ENCODE measurements at regions of chr21 and their contacts with region 1.

Region 1: DNA sequence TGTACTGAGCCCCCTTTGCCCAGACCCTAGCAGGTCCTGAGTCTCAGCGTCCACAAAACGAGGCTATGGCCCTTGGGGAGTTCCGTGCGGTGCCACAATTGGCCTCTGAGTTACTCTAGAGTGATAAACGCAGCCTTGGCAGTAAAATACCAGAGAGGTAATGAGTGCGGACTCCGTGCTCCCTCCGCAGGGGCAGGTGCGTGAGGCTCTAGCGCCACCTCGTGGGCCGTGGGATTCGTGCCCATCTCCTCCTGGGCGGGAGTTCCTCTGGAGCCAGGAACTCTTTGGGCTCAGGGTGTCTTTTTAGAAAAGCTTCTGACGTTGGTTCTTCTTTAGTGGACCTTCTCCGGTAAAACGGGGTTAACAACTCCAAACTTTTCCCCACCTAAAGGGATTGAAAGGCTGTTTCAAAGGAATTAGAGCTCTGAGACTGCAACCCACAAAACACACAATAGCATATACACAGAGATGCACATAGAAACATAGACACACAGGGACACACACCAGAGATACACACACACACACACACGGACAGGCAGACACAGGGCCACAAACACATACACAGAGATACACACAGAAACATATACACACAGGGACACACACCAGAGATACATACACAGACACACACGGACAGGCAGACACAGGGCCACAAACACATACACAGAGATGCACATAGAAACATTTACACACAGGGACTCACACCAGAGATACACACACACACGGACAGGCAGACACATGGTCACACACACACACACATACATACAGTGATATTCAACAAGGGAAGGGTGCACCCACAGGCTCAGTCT is 99.4 kb downstream of the KCNJ15 start:
- DNase-seq: peak; percentile 58 to 66
- ATAC-seq: peak; percentile 83 to 93; a peak in 5 of 6 replicates
- H3K4me3 ChIP-seq: no peak overlapping the region
- H3K27ac ChIP-seq: peak overlapping the region; percentile 84 to 86
- H3K4me1 ChIP-seq: peaks cover 24% of the 10 kb centered on the region
- CTCF ChIP-seq: peak; percentile 80
- EP300 ChIP-seq: no peak
- POLR2A ChIP-seq: no peak
- RAD21 ChIP-seq: peak; percentile 97 to 98

Region 2: GRCh38 chr21:37675202-37675801 is 680.9 kb before region 1 on chr21:
- CTCF ChIA-PET with region 1: interaction called, 19 read pairs
- POLR2A ChIA-PET with region 1: no interaction called
- DNase-seq: peak; percentile 14 to 49
- ATAC-seq: peak; percentile 77 to 91; a peak in 5 of 6 replicates
- H3K4me3 ChIP-seq: no peak overlapping the region
- H3K27ac ChIP-seq: peak overlapping the region; percentile 56 to 65; a peak in 5 of 6 replicates
- H3K4me1 ChIP-seq: peaks cover 26% of the 10 kb centered on the region
- CTCF ChIP-seq: peak; percentile 73
- EP300 ChIP-seq: no peak
- POLR2A ChIP-seq: no peak
- RAD21 ChIP-seq: peak; percentile 65 to 76

Region 3: DNA sequence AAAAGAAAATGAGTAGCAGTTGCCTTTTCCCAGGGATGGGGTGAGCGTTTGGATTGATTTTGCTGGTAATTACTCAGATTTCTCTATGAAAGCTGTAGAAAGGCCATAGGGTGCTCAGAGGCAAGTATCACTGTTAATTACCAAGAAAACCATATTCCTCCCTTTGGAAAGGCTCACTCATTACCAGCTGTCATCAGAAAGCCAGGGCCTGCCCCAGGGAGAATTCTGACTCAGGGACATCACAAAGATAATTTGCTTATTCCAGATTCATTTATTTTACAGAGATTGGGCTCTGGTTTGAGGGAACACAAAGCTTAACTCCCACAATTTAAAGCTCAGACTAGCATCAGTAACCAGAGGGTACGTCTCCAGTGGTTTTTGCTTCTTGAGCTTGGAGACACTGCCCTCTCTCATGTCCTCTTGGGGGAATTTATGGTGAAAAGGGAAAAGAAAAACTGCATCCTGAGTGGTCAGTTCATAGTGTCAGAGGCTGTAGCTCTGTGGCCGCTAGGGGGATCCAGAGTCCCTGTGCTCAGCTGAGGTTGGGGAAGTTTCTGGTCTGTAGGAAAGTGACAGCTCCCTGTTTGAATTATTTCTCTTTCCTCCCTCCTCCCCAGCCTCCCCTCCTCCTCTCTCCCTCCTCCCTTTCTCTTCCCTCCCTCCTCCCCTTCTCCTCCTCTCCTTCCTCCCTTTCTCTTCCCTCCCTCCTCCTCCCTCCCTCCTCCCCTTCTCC is 644.2 kb before region 1 on chr21:
- CTCF ChIA-PET with region 1: interaction called, 31 read pairs
- POLR2A ChIA-PET with region 1: interaction called, 4 read pairs
- DNase-seq: peak; percentile 27 to 74
- ATAC-seq: peak; percentile 93 to 96
- H3K4me3 ChIP-seq: no peak overlapping the region
- H3K27ac ChIP-seq: peak overlapping the region; percentile 52 to 60
- H3K4me1 ChIP-seq: peaks cover 9% of the 10 kb centered on the region
- CTCF ChIP-seq: peak; percentile 71
- EP300 ChIP-seq: no peak
- POLR2A ChIP-seq: no peak
- RAD21 ChIP-seq: peak; percentile 80 to 83

Region 4: GRCh38 chr21:38140210-38140907 is 215.8 kb before region 1 on chr21:
- CTCF ChIA-PET with region 1: interaction called, 10 read pairs
- POLR2A ChIA-PET with region 1: interaction called, 7 read pairs
- DNase-seq: peak; percentile 17 to 92
- ATAC-seq: peak; percentile 88 to 92
- H3K4me3 ChIP-seq: no peak overlapping the region
- H3K27ac ChIP-seq: peak overlapping the region; percentile 93 to 99
- H3K4me1 ChIP-seq: peaks cover 56% of the 10 kb centered on the region
- CTCF ChIP-seq: no peak
- EP300 ChIP-seq: no peak; a peak in 1 of 5 replicates
- POLR2A ChIP-seq: no peak
- RAD21 ChIP-seq: no peak

Region 5: GRCh38 chr21:38219049-38219628 is 137.1 kb before region 1 on chr21:
- CTCF ChIA-PET with region 1: interaction called, 17 read pairs
- POLR2A ChIA-PET with region 1: no interaction called
- DNase-seq: peak; percentile 8 to 70
- ATAC-seq: peak in 1 of 2 experiments; percentile 71; a peak in 3 of 6 replicates
- H3K4me3 ChIP-seq: no peak overlapping the region
- H3K27ac ChIP-seq: no peak overlapping the region
- H3K4me1 ChIP-seq: no peaks in the 10 kb centered on the region
- CTCF ChIP-seq: peak; percentile 30
- EP300 ChIP-seq: no peak
- POLR2A ChIP-seq: no peak
- RAD21 ChIP-seq: peak; percentile 29 to 61; a peak in 3 of 5 replicates

Region 6: GRCh38 chr21:38343693-38344092 is 12.5 kb before region 1 on chr21:
- CTCF ChIA-PET with region 1: interaction called, 13 read pairs
- POLR2A ChIA-PET with region 1: no interaction called
- DNase-seq: peak; percentile 58 to 84
- ATAC-seq: peak; percentile 95
- H3K4me3 ChIP-seq: no peak overlapping the region
- H3K27ac ChIP-seq: peak overlapping the region; percentile 86 to 95
- H3K4me1 ChIP-seq: peaks cover 32% of the 10 kb centered on the region
- CTCF ChIP-seq: no peak
- EP300 ChIP-seq: peak; percentile 70 to 75; a peak in 4 of 5 replicates
- POLR2A ChIP-seq: no peak
- RAD21 ChIP-seq: peak; percentile 15 to 47; a peak in 2 of 5 replicates

Measured in A549 (cell line).